H1 (cell line): ENCODE measurements at regions of chr5 and their contacts with region 1.

Region 1: GRCh38 chr5:6745706-6746222 is 32.5 kb downstream of the TENT4A start:
- DNase-seq: no peak
- H3K4me3 ChIP-seq: no peak overlapping the region
- H3K27ac ChIP-seq: no peak overlapping the region
- H3K4me1 ChIP-seq: peaks cover 0 to 3% (median 0%) of the 10 kb centered on the region in 4 experiments; a peak in 3 of 7 replicates
- H3K27me3 ChIP-seq: no peaks in the 10 kb centered on the region
- CTCF ChIP-seq: peak in 2 of 3 experiments; percentile 49 to 72; a peak in 3 of 4 replicates
- EP300 ChIP-seq: no peak
- POLR2A ChIP-seq: no peak
- RAD21 ChIP-seq: peak; percentile 76 to 83

Region 2: DNA sequence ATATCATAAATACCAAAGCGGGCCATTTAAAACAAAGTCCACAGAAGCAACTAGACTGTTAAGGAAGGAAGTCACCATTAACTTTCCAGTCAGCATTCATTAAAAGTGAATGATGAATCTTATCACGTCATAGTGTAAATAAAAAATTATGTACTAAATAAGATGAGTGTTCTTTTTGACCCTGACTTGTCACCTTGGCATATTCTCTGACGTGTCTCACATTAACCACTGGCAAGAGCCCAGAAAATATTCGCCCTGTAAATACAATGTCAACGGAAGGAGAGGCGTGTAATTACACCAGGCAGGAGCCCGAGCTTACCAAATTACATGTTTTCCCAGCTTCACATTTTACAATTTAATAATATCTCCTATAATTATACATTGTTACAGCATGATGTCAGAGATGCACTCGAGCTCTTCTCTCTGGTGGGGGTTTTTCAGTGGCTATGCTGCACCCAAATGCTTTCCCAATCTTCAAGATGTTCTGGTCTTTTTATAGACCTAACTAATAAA is 326.4 kb before region 1 on chr5:
- CTCF ChIA-PET with region 1: no interaction called
- POLR2A ChIA-PET with region 1: no interaction called
- DNase-seq: no peak
- H3K4me3 ChIP-seq: no peak overlapping the region
- H3K27ac ChIP-seq: no peak overlapping the region
- H3K4me1 ChIP-seq: no peaks in the 10 kb centered on the region
- H3K27me3 ChIP-seq: no peaks in the 10 kb centered on the region; a peak in 1 of 7 replicates
- CTCF ChIP-seq: no peak
- EP300 ChIP-seq: no peak
- POLR2A ChIP-seq: no peak
- RAD21 ChIP-seq: no peak

Region 3: GRCh38 chr5:6700074-6700684 is 45.6 kb before region 1 on chr5:
- CTCF ChIA-PET with region 1: no interaction called
- POLR2A ChIA-PET with region 1: no interaction called
- DNase-seq: no peak
- H3K4me3 ChIP-seq: no peak overlapping the region
- H3K27ac ChIP-seq: no peak overlapping the region
- H3K4me1 ChIP-seq: peaks cover 3 to 12% (median 6%) of the 10 kb centered on the region in 4 experiments; a peak in 6 of 7 replicates
- H3K27me3 ChIP-seq: no peaks in the 10 kb centered on the region
- CTCF ChIP-seq: no peak
- EP300 ChIP-seq: no peak
- POLR2A ChIP-seq: no peak
- RAD21 ChIP-seq: no peak

Region 4: DNA sequence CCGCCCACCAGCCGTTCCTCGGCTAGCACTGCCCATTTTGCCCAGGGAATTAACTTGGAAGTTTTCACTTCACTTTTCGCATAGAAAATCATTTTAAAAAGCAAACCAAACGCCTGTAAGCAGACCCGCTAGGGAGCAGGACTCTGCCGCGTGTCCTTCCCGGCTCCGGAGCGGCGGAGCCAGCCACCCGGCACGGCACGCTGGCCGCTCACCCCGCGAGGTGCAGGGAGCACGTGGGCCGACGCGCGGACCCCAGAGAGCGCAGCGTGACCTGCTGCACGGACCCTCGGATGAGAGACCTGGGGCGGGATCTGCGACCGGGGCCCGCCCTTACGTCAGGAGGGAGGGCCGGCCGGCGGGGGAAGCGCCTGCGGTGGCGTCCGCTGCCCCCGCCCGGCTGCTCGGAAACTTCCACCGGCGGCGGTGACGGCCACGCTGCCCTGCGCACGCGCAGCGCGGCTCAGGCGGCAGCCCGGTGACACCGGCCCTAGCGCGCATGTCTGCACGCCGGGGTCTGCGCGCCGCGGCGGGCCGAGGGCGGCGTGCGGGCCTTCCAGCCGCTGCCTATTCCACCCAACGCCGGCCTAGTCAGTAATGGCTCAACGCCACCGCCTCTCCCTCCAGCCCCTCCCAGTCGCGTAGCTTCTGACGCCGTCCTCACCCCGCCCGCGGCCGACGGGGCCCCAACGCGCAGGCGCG is 33.0 kb before region 1 on chr5:
- CTCF ChIA-PET with region 1: interaction called, 15 read pairs
- POLR2A ChIA-PET with region 1: no interaction called
- DNase-seq: peak; percentile 84 to 96
- H3K4me3 ChIP-seq: peak overlapping the region; percentile 67 to 73 (median 70)
- H3K27ac ChIP-seq: peak overlapping the region; percentile 62; the same call in 1 of the 2 replicates
- H3K4me1 ChIP-seq: peaks cover 0 to 12% (median 5%) of the 10 kb centered on the region in 4 experiments; a peak in 5 of 7 replicates
- H3K27me3 ChIP-seq: peaks cover 0 to 3% (median 0%) of the 10 kb centered on the region in 4 experiments; a peak in 3 of 7 replicates
- CTCF ChIP-seq: no peak
- EP300 ChIP-seq: peak; percentile 24 to 53; a peak in 1 of 3 replicates
- POLR2A ChIP-seq: peak in 1 of 2 experiments; percentile 64; a peak in 2 of 3 replicates
- RAD21 ChIP-seq: 0 out of 4 replicates have a peak, but pooled peaks of 1 of the 2 experiments have one; percentile 5

Region 5: DNA sequence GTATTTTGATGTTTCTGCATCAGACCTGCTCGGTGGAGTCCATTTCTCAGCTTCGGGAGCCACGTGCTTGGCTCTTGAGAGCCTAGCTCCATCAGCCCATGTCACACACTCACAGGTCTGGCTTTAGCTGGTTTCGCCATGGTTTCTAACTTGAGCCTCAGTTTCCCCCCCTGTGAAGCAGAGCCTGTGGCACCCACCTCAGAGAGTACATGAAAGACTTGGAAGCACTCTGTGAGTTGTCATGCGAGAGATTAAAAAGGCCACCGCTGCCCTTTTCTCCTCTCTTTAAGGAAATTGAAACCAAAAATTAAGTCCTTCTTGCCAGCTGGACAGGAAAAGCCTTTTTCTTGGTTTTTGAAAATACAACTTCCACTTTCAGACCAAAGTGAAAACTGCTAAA is 23.7 kb before region 1 on chr5:
- CTCF ChIA-PET with region 1: interaction called, 25 read pairs
- POLR2A ChIA-PET with region 1: interaction called, 4 read pairs
- DNase-seq: no peak
- H3K4me3 ChIP-seq: no peak overlapping the region
- H3K27ac ChIP-seq: no peak overlapping the region
- H3K4me1 ChIP-seq: peaks cover 0 to 7% (median 4%) of the 10 kb centered on the region in 4 experiments; a peak in 5 of 7 replicates
- H3K27me3 ChIP-seq: no peaks in the 10 kb centered on the region
- CTCF ChIP-seq: no peak
- EP300 ChIP-seq: no peak
- POLR2A ChIP-seq: no peak
- RAD21 ChIP-seq: no peak

Region 6: DNA sequence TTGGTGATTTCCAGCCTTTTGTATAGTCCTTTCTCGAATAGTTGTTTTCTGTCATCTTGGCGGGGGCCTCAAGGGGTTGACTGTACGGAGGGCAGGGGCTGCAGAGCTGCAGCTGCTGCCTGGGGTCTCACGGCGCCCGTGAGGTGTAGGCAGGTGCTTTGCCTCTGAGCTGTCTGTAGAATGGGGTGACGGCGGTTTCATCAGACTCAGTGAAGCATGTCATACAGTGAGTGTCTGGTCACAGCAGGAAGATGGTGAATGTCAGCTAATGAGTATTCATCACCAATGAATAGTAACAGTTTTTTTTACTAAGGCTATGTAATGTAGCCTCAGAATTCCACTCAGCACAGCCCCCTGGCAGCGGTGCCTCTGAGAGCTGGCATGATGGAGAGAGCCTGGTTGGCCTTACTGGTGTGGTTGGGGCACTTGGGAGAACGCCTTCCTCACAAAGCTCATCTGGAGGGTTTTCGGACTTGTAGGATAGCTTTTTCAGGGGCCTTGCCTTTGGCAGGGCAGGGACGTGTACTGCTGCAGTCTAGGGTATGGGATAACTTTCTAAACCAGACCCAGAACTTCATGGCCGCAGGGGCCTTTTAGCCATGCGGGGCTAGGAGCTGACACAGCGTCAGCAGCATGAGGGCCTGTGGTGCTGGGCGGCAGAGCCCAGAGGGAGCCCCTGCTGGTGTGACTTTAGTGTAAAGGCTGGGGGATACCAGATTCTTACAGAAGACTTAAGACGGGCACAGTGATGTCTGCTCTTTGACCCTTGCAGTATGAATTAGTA is 17.6 kb before region 1 on chr5:
- CTCF ChIA-PET with region 1: interaction called, 25 read pairs
- POLR2A ChIA-PET with region 1: no interaction called
- DNase-seq: no peak
- H3K4me3 ChIP-seq: no peak overlapping the region
- H3K27ac ChIP-seq: no peak overlapping the region
- H3K4me1 ChIP-seq: peaks cover 3 to 13% (median 6%) of the 10 kb centered on the region in 4 experiments; a peak in 6 of 7 replicates
- H3K27me3 ChIP-seq: no peaks in the 10 kb centered on the region
- CTCF ChIP-seq: no peak
- EP300 ChIP-seq: no peak
- POLR2A ChIP-seq: no peak
- RAD21 ChIP-seq: no peak; a peak in 1 of 4 replicates